Sciatic nerve (tissue), 2 donors: ENCODE measurements at regions of chr3 and their contacts with region 1.

Region 1: GRCh38 chr3:196193736-196194541 is 17.3 kb downstream of the ZDHHC19 start:
- DNase-seq: no peak
- ATAC-seq: peak; percentile 50

Region 2: DNA sequence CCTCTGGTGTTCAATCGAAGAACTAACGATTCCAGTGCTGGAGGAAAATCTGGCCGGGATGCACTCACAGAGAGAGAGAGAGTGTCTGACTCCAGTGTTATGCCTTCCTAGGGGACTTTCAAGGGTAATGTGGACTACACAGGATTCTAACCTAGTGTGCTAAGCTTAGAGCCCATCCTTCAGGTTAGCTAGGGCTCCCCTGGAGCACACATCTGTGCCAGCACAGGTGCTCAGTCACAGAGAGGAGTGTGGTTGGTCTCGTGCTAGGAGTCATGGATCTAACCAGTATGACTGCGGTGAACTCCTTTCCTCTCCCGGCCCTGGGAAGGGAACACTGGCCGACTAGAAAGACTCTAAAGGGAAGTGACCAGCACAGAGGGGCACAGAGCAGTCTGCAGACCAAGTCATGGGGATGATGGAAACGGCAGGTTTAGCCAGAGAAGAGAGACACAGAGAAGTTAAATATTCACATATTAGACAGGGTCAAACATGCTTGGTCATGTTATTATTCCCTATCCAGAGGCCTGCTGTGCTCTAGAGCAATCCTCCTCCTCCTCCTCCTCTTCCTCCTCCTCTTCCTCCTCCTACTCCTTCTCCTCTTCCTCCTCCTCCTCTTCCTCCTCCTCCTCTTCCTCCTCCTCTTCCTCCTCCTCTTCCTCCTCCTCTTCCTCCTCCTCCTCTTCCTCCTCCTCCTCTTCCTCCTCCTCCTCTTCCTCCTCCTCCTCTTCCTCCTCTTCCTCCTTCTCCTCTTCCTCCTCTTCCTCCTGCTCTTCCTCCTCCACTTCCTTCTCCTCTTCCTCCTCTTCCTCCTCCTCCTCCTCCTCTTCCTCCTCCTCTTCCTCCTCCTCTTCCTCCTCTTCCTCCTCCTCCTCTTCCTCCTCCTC is 1203.2 kb before region 1 on chr3:
- intact Hi-C with region 1: no loop called
- DNase-seq: no peak
- ATAC-seq: no peak

Region 3: GRCh38 chr3:196073188-196073838 is 120.6 kb before region 1 on chr3:
- intact Hi-C with region 1: loop called (anchors 1 kb)
- DNase-seq: peak; percentile 75
- ATAC-seq: peak; percentile 96

Region 4: DNA sequence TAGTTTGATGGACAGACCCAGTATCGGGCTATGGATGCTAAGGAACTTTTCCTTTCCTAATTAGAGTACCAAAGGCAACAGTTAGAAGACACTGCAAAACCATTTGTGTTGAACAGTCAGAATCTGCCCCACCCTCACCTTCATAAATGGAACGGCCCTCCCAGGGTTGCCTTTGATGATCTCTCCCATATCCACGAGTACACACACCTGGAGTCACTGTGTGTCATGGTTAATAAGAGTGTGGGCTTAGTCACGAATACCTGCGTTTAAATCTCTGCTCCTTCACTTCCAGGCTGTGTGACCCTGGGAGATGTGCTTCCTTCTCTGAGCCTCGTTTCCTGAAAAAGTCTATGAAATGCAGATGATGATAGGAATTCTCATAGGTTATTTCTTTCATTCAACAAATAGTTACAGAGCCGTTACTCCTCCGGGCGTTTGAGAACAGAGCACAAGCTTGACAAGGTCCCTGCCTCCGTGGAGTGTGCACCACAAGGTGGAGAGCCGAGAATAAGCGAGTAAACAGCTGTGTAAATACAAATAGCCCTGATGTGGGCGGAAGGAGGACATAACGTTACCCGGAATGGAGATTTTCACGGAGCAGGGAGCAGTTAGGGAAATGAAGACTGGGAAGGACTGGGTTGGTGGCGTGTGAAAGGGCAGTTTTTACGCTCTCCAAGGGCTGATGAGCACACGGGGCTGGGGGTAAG is 29.1 kb after region 1 on chr3:
- intact Hi-C with region 1: loop called (anchors 2 kb)
- DNase-seq: no peak
- ATAC-seq: no peak